ENCODE measurements at regions of chr6 and their contacts with region 1.

Region 1: DNA sequence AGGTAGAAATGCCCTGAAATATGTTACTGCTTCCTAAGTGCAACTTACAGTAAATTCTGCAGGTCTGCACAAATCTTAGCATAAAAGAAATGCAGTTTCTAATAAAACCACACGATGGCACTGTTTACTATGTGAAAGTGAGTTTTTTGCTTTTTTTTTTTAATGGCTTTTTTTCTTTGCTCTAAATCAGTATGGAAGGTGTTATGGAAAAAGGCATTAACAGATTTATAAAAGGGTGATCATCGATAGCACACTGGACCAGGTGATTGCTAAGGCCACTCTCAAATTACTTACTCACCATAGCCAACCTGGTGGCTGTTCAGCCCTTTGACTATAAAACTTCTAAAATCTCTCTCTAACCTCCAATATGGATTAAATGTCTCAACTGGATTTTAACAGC is 45.8 kb downstream of the AHI1 start:
- DNase-seq: no peak
- ATAC-seq: no peak
- H3K4me3 Mint-ChIP-seq: no peak overlapping the region
- H3K27ac Mint-ChIP-seq: no peak overlapping the region
- H3K4me1 Mint-ChIP-seq: peaks cover 2% of the 10 kb centered on the region
- H3K27me3 Mint-ChIP-seq: no peaks in the 10 kb centered on the region
- CTCF ChIP-seq: peak; percentile 80

Region 2: DNA sequence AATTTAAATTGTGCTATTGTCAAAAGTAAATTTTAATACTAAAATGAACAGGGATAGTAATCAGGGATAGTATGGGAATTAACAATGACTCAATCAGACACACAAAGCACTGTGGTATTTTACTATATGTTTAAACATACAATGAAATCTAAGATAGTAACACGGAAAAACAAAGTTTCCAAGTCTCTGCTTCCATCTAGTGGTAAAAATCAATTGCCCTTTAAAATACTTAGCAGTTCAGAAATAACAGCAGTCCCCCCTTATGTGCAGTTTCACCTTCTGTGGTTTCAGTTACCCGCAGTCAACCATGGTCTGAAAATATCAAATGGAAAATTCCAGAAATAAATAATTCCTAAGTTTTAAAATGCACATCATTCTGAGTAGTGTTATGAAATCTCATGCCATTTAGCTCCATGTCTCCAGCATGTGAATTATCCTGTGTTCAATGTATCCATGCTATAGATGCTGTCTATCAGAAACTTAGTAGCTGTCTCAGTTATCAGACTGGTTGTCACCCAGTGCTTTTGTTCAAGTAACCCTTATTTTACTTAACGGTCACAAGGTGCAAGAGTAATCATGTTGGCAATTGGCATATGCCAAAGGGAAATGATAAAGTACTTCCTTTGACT is 12.7 kb before region 1 on chr6:
- CTCF ChIA-PET with region 1: interaction called, 13 read pairs
- POLR2A ChIA-PET with region 1: no interaction called
- intact Hi-C with region 1: no loop called
- DNase-seq: peak; percentile 7
- ATAC-seq: no peak
- H3K4me3 Mint-ChIP-seq: no peak overlapping the region
- H3K27ac Mint-ChIP-seq: peak overlapping the region; percentile 34
- H3K4me1 Mint-ChIP-seq: peaks cover 26% of the 10 kb centered on the region
- H3K27me3 Mint-ChIP-seq: no peaks in the 10 kb centered on the region
- CTCF ChIP-seq: peak; percentile 85

Measured in activated CD8-positive, alpha-beta T cell treated with anti-CD3 and anti-CD28 coated beads for 36 hours (primary cell).